ENCODE measurements at regions of chr6 and their contacts with region 1.

Region 1: DNA sequence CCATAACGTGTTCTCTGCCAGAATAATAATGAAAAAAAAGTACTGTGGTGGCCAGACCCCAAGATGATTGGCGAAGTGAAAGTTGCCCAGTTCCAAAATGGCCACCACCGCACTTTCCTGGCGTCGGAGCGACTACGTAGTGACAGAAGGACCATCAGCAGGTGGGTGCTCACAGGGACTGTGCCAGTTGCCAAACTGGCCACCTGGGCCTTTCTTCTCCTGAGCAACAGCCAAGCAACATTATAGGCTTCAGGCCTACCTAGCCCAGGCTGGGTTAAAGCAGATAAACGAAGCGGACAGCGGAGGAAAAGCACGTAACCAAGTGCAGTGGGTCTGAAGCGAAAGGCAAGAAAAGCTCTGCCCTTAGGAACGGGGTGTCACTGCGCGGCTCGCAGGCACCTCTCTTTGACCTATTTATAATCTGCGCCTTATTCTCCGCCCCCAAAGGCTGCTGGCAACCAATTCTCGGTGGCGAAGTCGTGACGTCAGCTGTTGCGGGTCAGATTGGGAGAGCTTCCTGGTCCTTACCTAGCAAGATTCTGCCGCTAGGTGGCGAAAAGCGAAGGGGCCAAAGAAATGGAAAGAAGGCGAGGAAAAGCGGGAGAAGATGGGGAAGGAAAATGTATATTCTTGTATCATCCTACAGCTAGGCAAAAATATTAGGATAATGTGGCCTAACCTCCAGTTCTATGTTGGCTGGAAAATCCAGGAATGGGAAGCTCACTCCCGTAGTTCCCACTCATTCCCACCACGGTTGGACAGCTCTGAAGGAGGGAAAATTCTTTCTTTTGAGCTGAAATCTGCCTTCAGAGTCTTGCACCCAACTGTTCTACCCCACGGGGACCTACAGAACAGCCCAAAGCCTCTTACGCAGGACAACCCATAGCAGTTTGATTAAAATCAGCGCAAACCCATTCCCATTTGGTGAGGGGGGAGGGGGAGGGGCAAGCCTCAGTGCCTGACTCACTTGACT is 6.9 kb upstream of the MOG start:
- DNase-seq: peak; percentile 96 to 100 (median 99)

Region 2: DNA sequence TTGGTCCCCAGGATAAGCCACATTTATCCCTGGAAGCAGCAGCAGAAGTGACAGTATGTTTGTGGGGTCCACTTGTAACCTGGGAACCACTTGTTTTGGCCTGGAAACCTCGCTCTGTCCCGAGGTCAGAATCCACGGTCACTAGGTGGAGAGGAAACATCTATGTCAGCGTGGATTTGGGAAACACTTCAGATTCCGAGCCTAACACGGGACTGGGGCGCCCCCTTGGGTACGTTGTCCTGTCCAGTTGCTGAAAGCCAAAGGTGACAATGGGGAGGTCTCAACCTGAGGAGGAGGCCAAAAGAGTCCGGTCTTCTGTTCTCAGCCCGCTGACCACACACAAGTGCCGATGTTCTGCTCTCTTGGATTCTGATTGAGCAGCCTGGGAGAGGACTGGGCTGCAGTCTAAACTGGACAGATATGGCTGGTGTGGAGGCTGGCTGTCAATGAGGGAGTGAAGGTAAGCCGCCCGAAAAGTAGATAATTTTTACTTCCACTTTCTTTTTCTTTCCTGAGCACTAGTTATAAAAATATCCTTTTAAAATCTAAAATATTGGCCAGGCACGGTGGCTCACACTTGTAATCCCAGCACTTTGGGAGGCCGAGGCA is 35.8 kb after region 1 on chr6:
- intact Hi-C with region 1: loop called (anchors 5 kb)
- DNase-seq: peak in 6 of 10 donors; percentile 31 to 90 (median 58)

Region 3: DNA sequence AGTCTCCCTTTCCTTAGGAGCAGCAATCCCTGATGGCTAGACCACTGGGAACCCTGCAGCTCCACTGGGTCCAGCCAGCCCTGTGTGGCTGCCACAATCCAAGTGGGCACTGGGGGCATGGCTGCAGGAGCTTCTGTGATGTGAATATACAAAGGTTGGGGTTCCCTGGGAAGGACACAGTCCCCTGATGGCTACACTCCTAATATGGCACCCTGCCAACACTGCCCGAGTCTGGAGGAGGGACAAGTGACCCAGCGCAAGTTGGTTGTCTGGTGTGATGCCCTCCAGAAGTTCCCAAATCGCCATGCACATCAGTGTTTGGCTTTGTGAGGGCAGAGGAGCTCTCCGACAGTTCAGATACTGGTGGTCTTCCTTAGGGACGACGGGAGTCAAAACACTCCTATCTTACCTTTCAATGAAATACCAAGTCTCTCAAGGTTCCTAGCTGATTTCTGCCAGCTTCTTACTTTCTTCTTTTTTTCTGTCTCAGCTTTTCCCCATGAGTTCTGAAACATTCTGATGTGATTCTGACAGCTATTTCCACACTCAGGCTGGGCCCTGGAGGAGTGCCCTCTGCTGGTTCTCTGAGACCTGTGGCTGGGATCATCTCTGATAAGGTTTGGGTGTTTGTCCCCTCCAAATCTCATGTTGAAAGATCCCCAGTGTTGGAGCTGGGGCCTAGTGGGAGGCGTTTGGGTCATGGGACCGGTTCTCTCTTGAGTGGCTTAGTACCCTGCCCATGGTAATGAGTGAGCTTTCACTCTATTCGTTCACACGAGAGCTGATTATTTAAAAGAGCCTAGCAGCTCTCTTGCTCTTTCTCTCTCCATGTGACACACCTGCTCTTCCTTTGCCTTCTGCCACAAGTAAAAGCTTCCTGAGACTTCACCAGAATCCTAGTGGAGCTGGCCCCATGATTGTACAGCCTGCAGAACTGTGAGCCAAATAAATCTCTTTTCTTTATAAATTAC is 46.5 kb after region 1 on chr6:
- intact Hi-C with region 1: loop called (anchors 5 kb)
- DNase-seq: peak in 2 of 10 donors; percentile 40 to 59

Region 4: GRCh38 chr6:29763491-29764289 is 113.7 kb after region 1 on chr6:
- intact Hi-C with region 1: no loop called
- DNase-seq: no peak